GM13976 (cell line): ENCODE measurements at regions of chr10 and their contacts with region 1.

Region 1: DNA sequence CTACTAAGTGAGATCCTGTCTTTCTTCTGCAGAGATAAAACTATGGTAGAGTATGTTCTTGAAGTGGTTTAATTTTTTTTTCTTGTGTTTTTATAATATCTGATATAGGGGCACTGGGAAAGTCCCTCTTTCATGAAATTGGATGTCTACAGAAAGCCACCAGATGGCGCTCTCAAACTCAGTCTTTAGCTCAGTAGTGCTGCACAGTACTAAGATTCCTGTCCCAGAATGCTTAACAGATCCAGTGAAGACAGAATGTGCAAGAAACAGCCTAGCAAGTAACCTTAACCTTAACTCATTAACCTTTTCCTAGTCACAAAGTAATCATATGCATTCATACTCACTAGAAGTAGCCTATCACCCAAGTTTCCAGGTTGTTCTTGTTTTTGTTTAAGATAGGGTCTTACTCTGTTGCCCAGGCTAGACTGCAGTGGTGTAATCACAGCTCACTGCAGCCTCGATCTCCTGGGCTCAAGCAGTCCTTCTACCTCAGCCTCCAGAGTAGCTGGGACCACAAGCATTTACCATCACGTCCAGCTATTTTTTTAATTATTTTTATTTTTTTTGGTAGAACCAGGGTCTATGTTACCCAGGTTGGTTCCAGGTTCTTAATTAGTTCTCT is 56.7 kb downstream of the IDE start:
- DNase-seq: peak; percentile 68
- CTCF ChIP-seq: peak; percentile 57

Region 2: GRCh38 chr10:92573798-92574547 is 56.8 kb after region 1 on chr10 and contains the start of gene IDE:
- in situ Hi-C with region 1: loop called (anchors 10 kb)
- DNase-seq: peak; percentile 92
- CTCF ChIP-seq: peak; percentile 98